OCI-LY7 (cell line): ENCODE measurements at regions of chrX and their contacts with region 1.

Region 1: DNA sequence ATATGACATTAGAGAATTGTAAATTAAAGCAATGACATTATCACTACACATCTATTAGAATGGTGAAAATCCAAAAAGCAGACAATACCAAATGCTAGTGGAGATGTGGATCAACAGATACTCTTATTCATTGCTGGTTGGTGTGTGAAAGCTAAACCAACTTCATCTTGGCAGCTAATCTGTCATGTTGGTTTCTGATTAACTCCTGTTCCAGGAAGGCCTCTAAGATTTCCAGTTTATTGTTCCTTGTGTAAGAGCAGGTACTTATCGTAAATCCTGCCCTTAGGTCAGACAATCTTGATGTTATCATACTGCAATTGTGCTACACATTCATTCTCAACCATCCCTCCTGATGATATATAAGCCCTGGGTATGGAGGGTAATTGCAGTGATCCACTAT is 809.0 kb upstream of the DIAPH2 start:
- DNase-seq: no peak
- H3K4me3 ChIP-seq: no peak overlapping the region
- H3K27ac ChIP-seq: no peak overlapping the region
- H3K4me1 ChIP-seq: no peaks in the 10 kb centered on the region
- CTCF ChIP-seq: no peak

Region 2: GRCh38 chrX:95823796-95824195 is 51.9 kb before region 1 on chrX:
- CTCF ChIA-PET with region 1: no interaction called
- POLR2A ChIA-PET with region 1: no interaction called
- intact Hi-C with region 1: no loop called
- DNase-seq: no peak
- H3K4me3 ChIP-seq: no peak overlapping the region
- H3K27ac ChIP-seq: no peak overlapping the region
- H3K4me1 ChIP-seq: no peaks in the 10 kb centered on the region
- CTCF ChIP-seq: no peak

Region 3: GRCh38 chrX:95903490-95903889 is 27.8 kb after region 1 on chrX:
- CTCF ChIA-PET with region 1: no interaction called
- POLR2A ChIA-PET with region 1: interaction called, 11 read pairs
- intact Hi-C with region 1: no loop called
- DNase-seq: no peak
- H3K4me3 ChIP-seq: no peak overlapping the region
- H3K27ac ChIP-seq: no peak overlapping the region
- H3K4me1 ChIP-seq: no peaks in the 10 kb centered on the region
- CTCF ChIP-seq: no peak

Region 4: DNA sequence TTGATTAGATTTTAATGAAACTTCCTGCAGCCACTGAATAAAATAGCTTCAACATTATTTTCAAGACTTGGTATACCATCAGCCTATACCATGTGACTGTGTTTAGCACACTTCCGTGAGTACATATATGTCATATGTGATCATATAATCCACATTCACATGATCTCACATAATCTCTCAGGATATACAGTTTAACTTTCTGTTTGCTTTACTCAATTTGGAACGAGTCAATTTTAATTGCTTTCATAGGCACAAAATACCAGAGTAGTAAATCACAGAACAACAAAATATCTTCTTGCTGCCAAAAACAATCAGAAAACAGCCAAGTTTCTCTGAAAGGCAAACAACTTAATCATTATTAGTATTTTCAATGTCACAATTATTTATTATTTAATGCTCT is 77.9 kb after region 1 on chrX:
- CTCF ChIA-PET with region 1: no interaction called
- POLR2A ChIA-PET with region 1: no interaction called
- intact Hi-C with region 1: no loop called
- DNase-seq: no peak
- H3K4me3 ChIP-seq: no peak overlapping the region
- H3K27ac ChIP-seq: no peak overlapping the region
- H3K4me1 ChIP-seq: no peaks in the 10 kb centered on the region
- CTCF ChIP-seq: no peak